Activated B cell treated with CpG ODN at 0.5 μM for 24 hours (primary cell): ENCODE measurements at regions of chr22 and their contacts with region 1.

Region 1: GRCh38 chr22:50030297-50031188 is 18.0 kb upstream of the IL17REL start:
- DNase-seq: peak; percentile 77
- ATAC-seq: peak; percentile 97
- H3K4me3 Mint-ChIP-seq: no peak overlapping the region
- H3K27ac Mint-ChIP-seq: no peak overlapping the region
- H3K4me1 Mint-ChIP-seq: peaks cover 7% of the 10 kb centered on the region
- H3K27me3 Mint-ChIP-seq: peaks cover 8% of the 10 kb centered on the region
- CTCF ChIP-seq: peak; percentile 75

Region 2: DNA sequence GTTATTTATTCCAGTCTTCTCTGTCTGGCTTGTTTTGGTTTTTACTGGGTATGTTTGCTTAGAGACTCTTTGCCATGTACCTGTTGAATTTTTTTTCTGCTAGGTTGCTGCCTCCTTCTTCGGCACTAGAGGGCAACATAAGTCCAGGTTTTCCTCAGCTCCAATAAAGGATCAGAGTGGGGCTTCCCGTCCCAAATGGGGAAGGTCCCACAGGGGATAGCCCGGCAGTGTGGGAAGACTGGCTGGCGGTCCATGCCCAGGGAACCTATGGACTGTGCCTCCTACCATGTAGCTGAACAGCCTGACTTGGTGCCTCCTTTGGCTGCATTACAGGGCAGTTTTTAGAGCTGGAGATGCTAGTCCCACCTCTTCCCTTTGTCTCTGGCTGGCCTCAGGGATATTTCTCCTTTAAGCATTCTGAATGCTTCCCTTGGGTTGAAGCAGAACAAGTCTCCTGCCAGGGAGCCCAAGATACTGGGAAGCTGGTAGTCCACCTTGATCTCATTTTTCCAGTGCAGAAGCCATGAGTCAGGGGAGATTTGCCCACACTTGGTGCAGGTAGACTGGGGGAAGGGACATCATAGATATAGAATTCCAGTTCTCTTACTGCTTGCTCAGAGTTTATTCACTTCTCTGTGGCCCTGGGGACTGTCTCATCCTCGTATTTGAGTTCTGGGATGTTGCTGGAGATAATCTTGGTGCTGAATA is 263.0 kb before region 1 on chr22:
- CTCF ChIA-PET with region 1: interaction called, 38 read pairs
- POLR2A ChIA-PET with region 1: interaction called, 8 read pairs
- intact Hi-C with region 1: loop called (anchors 1 kb)
- DNase-seq: peak; percentile 15
- ATAC-seq: peak; percentile 68
- H3K4me3 Mint-ChIP-seq: no peak overlapping the region
- H3K27ac Mint-ChIP-seq: no peak overlapping the region
- H3K4me1 Mint-ChIP-seq: peaks cover 9% of the 10 kb centered on the region
- H3K27me3 Mint-ChIP-seq: no peaks in the 10 kb centered on the region
- CTCF ChIP-seq: no peak

Region 3: DNA sequence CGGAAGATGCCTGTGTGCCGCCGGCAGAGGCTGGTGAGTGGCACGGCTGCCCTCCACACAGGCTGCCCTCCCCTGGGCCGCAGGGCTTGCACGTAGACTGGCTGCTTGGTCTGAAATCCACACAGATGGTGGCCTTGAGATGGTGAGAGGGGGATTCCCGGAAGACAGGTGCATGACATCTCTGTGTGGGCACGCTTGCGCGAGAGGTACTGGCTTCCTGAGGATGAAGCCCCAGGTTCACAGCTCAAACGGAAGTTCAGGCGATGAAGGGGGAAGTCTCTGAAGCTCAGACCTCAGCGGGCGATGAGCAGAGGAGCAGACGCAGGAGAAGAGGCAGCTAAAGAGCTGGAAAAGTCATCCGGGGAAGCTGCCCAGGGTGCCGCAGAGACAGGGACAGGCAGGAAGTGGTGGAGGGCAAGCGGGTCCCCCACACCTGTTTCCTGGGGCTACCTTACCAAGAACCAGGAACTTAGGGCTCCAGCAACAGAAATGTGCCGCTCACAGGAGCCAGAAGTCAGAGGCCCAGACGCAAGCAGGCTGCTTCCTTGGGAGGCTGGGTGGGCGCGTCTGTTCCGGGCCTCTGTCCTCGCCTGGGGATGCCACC is 104.9 kb before region 1 on chr22:
- CTCF ChIA-PET with region 1: interaction called, 91 read pairs
- POLR2A ChIA-PET with region 1: interaction called, 35 read pairs
- intact Hi-C with region 1: loop called (anchors 1 kb)
- DNase-seq: peak; percentile 75
- ATAC-seq: peak; percentile 76
- H3K4me3 Mint-ChIP-seq: peak overlapping the region; percentile 81
- H3K27ac Mint-ChIP-seq: peak overlapping the region; percentile 98
- H3K4me1 Mint-ChIP-seq: peaks cover 58% of the 10 kb centered on the region
- H3K27me3 Mint-ChIP-seq: no peaks in the 10 kb centered on the region
- CTCF ChIP-seq: no peak

Region 4: GRCh38 chr22:49979587-49980264 is 50.8 kb before region 1 on chr22:
- CTCF ChIA-PET with region 1: interaction called, 11 read pairs
- POLR2A ChIA-PET with region 1: interaction called, 3 read pairs
- intact Hi-C with region 1: loop called (anchors 5 kb)
- DNase-seq: no peak
- ATAC-seq: no peak
- H3K4me3 Mint-ChIP-seq: no peak overlapping the region
- H3K27ac Mint-ChIP-seq: peak overlapping the region; percentile 14
- H3K4me1 Mint-ChIP-seq: peaks cover 33% of the 10 kb centered on the region
- H3K27me3 Mint-ChIP-seq: peaks cover 2% of the 10 kb centered on the region
- CTCF ChIP-seq: no peak

Region 5: DNA sequence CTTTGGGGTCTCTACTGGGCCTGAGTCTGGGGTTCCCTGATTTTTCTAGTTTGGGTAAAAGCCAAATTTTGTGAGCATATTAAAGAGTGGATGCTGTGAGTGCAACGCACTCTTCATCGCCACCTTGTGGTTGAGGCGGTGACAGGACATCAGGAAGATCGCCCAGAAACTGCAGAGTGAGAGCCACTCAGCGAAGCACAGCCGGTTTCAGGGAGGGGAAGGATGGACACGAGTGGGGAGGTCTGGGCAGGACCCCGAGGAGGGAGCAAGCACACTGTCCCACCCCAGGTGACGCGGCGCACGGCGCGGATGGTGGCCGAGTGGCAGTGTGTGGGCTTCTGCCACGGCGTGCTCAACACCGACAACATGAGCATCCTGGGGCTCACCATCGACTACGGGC is 179.3 kb after region 1 on chr22:
- CTCF ChIA-PET with region 1: no interaction called
- POLR2A ChIA-PET with region 1: no interaction called
- intact Hi-C with region 1: loop called (anchors 5 kb)
- DNase-seq: peak; percentile 60
- ATAC-seq: peak; percentile 54
- H3K4me3 Mint-ChIP-seq: no peak overlapping the region
- H3K27ac Mint-ChIP-seq: peak overlapping the region; percentile 35
- H3K4me1 Mint-ChIP-seq: peaks cover 27% of the 10 kb centered on the region
- H3K27me3 Mint-ChIP-seq: no peaks in the 10 kb centered on the region
- CTCF ChIP-seq: no peak

Region 6: GRCh38 chr22:50341977-50342650 is 311.6 kb after region 1 on chr22:
- CTCF ChIA-PET with region 1: no interaction called
- POLR2A ChIA-PET with region 1: no interaction called
- intact Hi-C with region 1: no loop called
- DNase-seq: peak; percentile 80
- ATAC-seq: peak; percentile 61
- H3K4me3 Mint-ChIP-seq: peak overlapping the region; percentile 83
- H3K27ac Mint-ChIP-seq: peak overlapping the region; percentile 89
- H3K4me1 Mint-ChIP-seq: peaks cover 12% of the 10 kb centered on the region
- H3K27me3 Mint-ChIP-seq: no peaks in the 10 kb centered on the region
- CTCF ChIP-seq: peak; percentile 91